K562 (cell line): ENCODE measurements at regions of chr7 and their contacts with region 1.

Region 1: GRCh38 chr7:130063036-130063435 is 7.3 kb upstream of the KLHDC10 start:
- DNase-seq: peak; percentile 51 to 90 (median 64)
- ATAC-seq: peak; percentile 86
- H3K4me3 ChIP-seq: no peak overlapping the region
- H3K27ac ChIP-seq: no peak overlapping the region
- H3K4me1 ChIP-seq: peaks cover 13 to 25% of the 10 kb centered on the region in 2 experiments
- H3K27me3 ChIP-seq: no peaks in the 10 kb centered on the region
- CTCF ChIP-seq: peak; percentile 79 to 97 (median 93)
- EP300 ChIP-seq: no peak
- POLR2A ChIP-seq: no peak
- RAD21 ChIP-seq: peak; percentile 65 to 72

Region 2: GRCh38 chr7:129948877-129949291 is 114.2 kb before region 1 on chr7:
- CTCF ChIA-PET with region 1: no interaction called
- POLR2A ChIA-PET with region 1: no interaction called
- in situ Hi-C with region 1: no loop called
- intact Hi-C with region 1: no loop called
- DNase-seq: peak; percentile 81 to 92 (median 87)
- ATAC-seq: peak; percentile 84
- H3K4me3 ChIP-seq: no peak overlapping the region
- H3K27ac ChIP-seq: peak overlapping the region; percentile 12; the same call in 2 of the 3 replicates
- H3K4me1 ChIP-seq: peaks cover 44 to 48% of the 10 kb centered on the region in 2 experiments
- H3K27me3 ChIP-seq: no peaks in the 10 kb centered on the region
- CTCF ChIP-seq: no peak
- EP300 ChIP-seq: no peak; the same call in 1 of the 2 replicates
- POLR2A ChIP-seq: no peak
- RAD21 ChIP-seq: no peak; a peak in 1 of 4 replicates

Region 3: DNA sequence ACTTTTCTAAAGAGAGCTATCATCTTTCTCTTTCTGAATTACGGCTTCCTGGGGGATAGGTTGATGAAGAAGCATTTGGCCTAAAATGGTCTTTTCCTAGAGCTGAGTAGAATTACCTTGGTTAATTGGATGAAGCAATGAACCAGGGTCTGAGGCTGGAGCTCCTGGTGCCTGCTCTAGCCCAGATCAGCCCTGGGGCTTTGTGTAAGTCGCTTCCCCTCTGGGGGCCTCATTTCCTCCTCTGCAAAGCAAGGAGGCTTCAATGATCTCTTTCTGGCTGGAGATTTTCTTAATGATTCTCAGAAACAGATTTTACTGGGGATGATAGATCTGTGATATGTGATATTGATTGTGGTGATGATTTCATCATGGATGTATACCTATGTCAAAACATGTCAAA is 200.1 kb after region 1 on chr7:
- CTCF ChIA-PET with region 1: no interaction called
- POLR2A ChIA-PET with region 1: no interaction called
- in situ Hi-C with region 1: no loop called
- intact Hi-C with region 1: loop called (anchors 5 kb)
- DNase-seq: no peak
- ATAC-seq: no peak
- H3K4me3 ChIP-seq: no peak overlapping the region
- H3K27ac ChIP-seq: no peak overlapping the region
- H3K4me1 ChIP-seq: no peaks in the 10 kb centered on the region
- H3K27me3 ChIP-seq: peaks cover 10 to 19% of the 10 kb centered on the region in 2 experiments; a peak in 3 of 5 replicates
- CTCF ChIP-seq: no peak
- EP300 ChIP-seq: no peak
- POLR2A ChIP-seq: no peak
- RAD21 ChIP-seq: no peak

Region 4: DNA sequence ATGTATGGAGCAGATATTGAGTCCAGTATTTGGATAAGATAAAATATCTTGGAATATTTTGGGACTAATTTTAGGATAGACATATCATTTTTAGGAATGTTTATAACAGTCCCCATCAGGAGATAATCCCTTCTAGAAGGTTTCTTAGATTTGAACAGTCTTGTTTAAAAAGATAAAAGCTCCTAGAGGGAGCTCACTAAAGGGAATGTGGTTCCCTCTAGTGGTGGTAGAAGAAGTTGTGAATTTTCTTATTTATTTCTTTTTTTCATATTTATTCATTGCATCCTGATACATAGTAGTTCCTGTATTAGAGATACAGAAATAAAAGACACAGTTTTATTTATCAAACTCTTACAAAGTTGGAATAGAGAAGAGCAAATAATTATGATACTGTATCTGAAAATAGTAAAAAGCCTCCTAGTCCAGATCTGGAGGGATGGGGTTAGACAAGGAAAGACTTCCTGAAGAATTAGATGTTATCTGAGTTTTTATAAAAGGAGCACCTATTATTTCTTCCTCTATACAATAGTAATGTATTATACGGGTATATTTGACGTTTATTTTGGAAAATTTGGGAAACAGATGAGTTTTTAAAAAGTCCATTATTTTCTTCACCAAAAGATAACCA is 695.5 kb after region 1 on chr7:
- CTCF ChIA-PET with region 1: interaction called, 3 read pairs
- POLR2A ChIA-PET with region 1: no interaction called
- in situ Hi-C with region 1: loop called (anchors 10 kb)
- intact Hi-C with region 1: loop called (anchors 2 kb)
- DNase-seq: peak; percentile 60 to 73 (median 64)
- ATAC-seq: peak; percentile 75
- H3K4me3 ChIP-seq: no peak overlapping the region
- H3K27ac ChIP-seq: no peak overlapping the region
- H3K4me1 ChIP-seq: no peaks in the 10 kb centered on the region
- H3K27me3 ChIP-seq: peaks cover 8 to 18% of the 10 kb centered on the region in 2 experiments
- CTCF ChIP-seq: peak in 2 of 3 experiments; percentile 65 to 95; a peak in 4 of 6 replicates
- EP300 ChIP-seq: no peak
- POLR2A ChIP-seq: no peak
- RAD21 ChIP-seq: peak; percentile 83 to 90